Activated T-helper 1 cell treated with anti-CD3 and anti-CD28 coated beads, Interleukin-12 subunit alpha, Interleukin-12 subunit beta, Interleukin-2, Interleukin-4 antibody, amounts not matched to agents 30 ng/mL and 10 ng/mL and 1 ng/mL, durations not matched to agents 14 hours and 24 hours and 36 hours (primary cell): ENCODE measurements at regions of chr3 and their contacts with region 1.

Region 1: GRCh38 chr3:132535575-132536441 is 61.3 kb upstream of the ACKR4 start:
- DNase-seq: peak; percentile 17
- H3K4me3 Mint-ChIP-seq: no peak overlapping the region
- H3K27ac Mint-ChIP-seq: peak overlapping the region; percentile 86
- H3K4me1 Mint-ChIP-seq: peaks cover 22% of the 10 kb centered on the region
- H3K27me3 Mint-ChIP-seq: no peaks in the 10 kb centered on the region

Region 2: DNA sequence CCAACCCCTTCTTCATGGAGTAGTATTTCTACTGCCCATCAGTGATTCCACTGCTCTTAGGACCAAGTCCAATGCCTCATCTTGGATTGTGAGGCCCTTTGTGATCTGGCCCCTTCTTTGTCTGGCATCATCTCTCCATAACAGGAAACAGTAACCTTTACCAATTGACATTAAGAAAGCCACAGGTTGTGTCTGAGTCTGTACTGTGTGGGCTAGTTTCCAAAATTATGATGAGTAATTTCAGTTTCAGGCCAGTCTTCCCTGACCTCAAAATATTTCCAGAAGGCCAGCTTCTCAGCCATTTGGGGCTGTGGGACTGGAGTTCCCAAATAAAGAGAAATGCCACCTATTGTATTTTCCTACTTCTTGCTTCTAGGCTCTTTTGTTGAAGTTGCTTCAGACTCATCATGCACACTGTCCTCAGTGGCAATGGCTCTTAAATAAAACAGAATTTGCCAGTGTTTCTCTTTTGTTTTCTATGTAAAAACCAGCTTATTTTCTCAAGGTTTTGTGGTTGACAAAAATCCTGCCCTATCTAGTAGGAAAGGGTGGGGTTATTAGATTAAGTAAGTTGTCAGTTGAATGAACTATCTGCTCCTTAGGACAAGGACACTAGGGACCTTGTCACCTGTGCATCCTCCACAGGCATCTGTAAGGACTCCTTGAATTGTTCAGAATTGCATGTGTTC is 14.2 kb after region 1 on chr3:
- intact Hi-C with region 1: loop called (anchors 1 kb)
- DNase-seq: no peak
- H3K4me3 Mint-ChIP-seq: peak overlapping the region; percentile 69
- H3K27ac Mint-ChIP-seq: peak overlapping the region; percentile 95
- H3K4me1 Mint-ChIP-seq: peaks cover 63% of the 10 kb centered on the region
- H3K27me3 Mint-ChIP-seq: no peaks in the 10 kb centered on the region

Region 3: DNA sequence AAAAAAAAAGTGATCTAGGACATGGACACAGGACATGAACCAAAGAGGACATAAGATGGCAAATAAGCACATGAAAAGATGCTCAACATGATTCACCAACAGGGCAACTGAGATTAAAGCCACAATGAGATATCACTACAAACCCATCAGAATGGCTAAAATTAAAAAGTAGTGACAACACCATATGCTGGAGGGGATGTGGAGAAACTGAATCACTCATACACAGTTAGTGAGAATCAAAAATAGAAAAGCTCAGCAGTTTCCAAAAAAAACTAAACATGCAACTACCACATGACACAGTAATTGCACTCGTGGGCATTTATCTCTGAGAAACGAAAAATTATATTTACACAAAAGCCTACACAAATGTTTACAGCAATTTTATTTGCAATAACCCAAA is 33.3 kb after region 1 on chr3:
- intact Hi-C with region 1: loop called (anchors 1 kb)
- DNase-seq: no peak
- H3K4me3 Mint-ChIP-seq: peak overlapping the region; percentile 4
- H3K27ac Mint-ChIP-seq: peak overlapping the region; percentile 86
- H3K4me1 Mint-ChIP-seq: peaks cover 19% of the 10 kb centered on the region
- H3K27me3 Mint-ChIP-seq: no peaks in the 10 kb centered on the region

Region 4: GRCh38 chr3:132641837-132642538 is 106.2 kb after region 1 on chr3:
- intact Hi-C with region 1: loop called (anchors 1 kb)
- DNase-seq: no peak
- H3K4me3 Mint-ChIP-seq: no peak overlapping the region
- H3K27ac Mint-ChIP-seq: no peak overlapping the region
- H3K4me1 Mint-ChIP-seq: peaks cover 4% of the 10 kb centered on the region
- H3K27me3 Mint-ChIP-seq: no peaks in the 10 kb centered on the region

Region 5: DNA sequence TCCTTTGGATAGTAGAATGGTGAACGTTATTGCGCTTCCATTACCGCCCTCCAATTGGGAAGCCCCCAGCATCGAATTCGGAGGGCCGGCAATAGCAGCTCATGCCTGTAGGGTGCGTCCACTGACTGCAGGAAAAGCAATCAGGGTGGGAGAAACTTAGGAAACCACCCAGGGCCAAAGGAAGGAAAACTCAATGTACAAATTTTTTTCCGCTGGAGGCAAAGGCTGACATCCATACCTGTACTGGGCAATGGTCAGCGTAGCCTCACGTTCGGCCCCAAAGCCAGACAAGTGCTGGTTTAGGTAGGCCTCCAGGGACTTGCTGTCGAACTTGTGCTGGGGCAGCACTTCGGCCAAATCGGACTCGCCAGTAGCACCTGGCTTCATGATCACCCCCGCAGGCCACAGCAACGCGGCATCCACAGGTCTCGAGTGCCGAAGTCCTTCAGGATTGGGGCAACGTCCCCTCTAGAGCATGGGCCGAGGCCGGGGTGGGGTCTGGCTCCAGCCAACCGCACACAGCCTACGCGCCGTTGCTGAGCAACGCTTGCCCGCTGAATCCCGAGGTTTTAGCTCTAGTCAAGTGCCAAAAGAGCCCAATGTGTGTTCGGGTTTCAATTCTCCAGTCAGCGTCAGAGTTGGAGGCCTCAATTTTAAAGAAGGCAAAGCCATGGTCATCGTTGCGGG is 123.7 kb after region 1 on chr3 and contains the start of gene ACAD11:
- intact Hi-C with region 1: loop called (anchors 1 kb)
- DNase-seq: peak; percentile 24
- H3K4me3 Mint-ChIP-seq: peak within 1 kb of the TSS; percentile 97
- H3K27ac Mint-ChIP-seq: peak within 1 kb of the TSS; percentile 98
- H3K4me1 Mint-ChIP-seq: peaks cover 44% of the 10 kb centered on the region
- H3K27me3 Mint-ChIP-seq: no peaks in the 10 kb centered on the region
- total RNA-seq, gene ACAD11: 14.1 and 14.3 TPM in 2 replicates